Common myeloid progenitor, CD34-positive (primary cell): ENCODE measurements at regions of chr12 and their contacts with region 1.

Region 1: DNA sequence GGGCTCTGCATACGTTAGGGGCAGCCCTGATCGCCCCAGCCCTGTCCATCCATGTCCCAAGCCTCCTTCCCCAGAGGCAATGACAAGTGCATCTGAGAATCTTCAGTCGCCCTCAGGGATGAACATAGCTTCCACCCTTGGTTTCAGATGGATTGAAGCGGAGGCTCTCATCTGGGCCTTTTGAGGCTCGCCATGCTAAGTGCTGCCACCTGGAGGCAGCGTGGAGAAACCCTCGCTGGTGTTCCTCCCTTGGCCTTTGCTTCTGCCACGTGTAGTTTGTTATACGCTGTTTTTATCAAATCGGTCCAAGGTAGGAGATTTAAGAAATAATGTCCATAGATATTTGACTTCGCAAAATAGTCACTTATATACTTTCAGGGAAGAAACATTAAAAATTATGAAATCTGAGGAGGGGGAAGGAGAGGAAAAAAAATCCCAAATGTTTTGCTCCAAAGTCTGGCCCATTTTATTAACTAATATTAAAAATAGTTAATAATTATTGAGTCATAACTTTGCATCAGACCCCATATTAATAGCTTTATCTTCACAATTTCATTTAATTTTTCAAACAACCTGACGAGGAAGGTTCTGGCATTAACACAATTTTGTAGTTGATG is 28.8 kb upstream of the LRRC10 start:
- DNase-seq: peak; percentile 49 to 79 (median 72)
- H3K4me3 ChIP-seq: no peak overlapping the region
- H3K27ac ChIP-seq: no peak overlapping the region
- H3K4me1 ChIP-seq: no peaks in the 10 kb centered on the region
- H3K27me3 ChIP-seq: no peaks in the 10 kb centered on the region

Region 2: DNA sequence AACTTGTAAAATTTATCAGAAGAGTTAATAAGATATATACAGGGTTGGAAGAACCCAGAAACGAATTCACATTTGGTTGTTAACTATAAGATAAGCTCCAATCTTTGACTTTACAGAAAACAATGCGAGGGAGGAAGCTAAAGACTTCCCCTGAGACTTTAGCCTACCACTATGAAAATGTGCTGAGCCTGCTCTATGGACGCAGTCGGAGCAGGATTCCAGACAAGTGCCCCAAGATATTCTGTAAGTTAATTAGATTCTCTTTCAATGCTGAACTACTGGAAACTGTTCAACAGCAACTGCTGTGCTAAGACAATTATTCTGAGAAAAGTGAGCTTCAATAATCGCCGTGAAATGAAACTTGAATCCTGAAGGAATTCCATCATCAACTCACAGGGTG is 20.5 kb before region 1 on chr12:
- CTCF ChIA-PET with region 1: interaction called, 30 read pairs
- POLR2A ChIA-PET with region 1: no interaction called
- DNase-seq: no peak
- H3K4me3 ChIP-seq: no peak overlapping the region
- H3K27ac ChIP-seq: no peak overlapping the region
- H3K4me1 ChIP-seq: no peaks in the 10 kb centered on the region
- H3K27me3 ChIP-seq: no peaks in the 10 kb centered on the region